ENCODE measurements at regions of chr14 and their contacts with region 1.

Region 1: GRCh38 chr14:94136575-94137331 is 7.3 kb upstream of the IFI27L2 start:
- DNase-seq: peak; percentile 68
- H3K27ac ChIP-seq: no peak overlapping the region
- CTCF ChIP-seq: peak; percentile 96

Region 2: GRCh38 chr14:93185354-93185761 is 951.4 kb before region 1 on chr14:
- CTCF ChIA-PET with region 1: no interaction called
- POLR2A ChIA-PET with region 1: no interaction called
- DNase-seq: no peak
- H3K27ac ChIP-seq: peak overlapping the region; percentile 97
- CTCF ChIP-seq: no peak

Region 3: GRCh38 chr14:94036313-94037050 is 100.3 kb before region 1 on chr14:
- CTCF ChIA-PET with region 1: interaction called, 14 read pairs
- POLR2A ChIA-PET with region 1: no interaction called
- DNase-seq: peak; percentile 75
- H3K27ac ChIP-seq: no peak overlapping the region
- CTCF ChIP-seq: peak; percentile 78

Region 4: DNA sequence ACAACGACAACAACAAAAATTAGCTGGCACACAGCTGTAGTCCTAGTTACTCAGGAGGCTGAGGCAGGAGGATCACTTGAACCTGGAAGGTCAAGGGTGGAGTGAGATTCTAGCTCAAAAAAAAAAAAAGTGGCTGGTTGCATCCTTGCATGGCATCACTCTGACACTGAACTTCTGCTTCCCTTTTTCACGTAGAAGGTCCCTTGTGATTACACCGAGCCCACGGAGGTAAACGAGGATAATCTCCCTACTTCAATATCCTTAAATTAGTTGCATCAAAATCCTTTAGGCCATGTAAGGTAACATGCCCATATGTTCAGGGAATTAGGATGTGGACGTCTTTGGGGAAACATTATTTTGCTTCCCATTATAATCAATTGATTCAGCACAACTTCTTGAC is 33.4 kb after region 1 on chr14:
- CTCF ChIA-PET with region 1: interaction called, 10 read pairs
- POLR2A ChIA-PET with region 1: no interaction called
- DNase-seq: no peak
- H3K27ac ChIP-seq: no peak overlapping the region
- CTCF ChIP-seq: no peak

Region 5: DNA sequence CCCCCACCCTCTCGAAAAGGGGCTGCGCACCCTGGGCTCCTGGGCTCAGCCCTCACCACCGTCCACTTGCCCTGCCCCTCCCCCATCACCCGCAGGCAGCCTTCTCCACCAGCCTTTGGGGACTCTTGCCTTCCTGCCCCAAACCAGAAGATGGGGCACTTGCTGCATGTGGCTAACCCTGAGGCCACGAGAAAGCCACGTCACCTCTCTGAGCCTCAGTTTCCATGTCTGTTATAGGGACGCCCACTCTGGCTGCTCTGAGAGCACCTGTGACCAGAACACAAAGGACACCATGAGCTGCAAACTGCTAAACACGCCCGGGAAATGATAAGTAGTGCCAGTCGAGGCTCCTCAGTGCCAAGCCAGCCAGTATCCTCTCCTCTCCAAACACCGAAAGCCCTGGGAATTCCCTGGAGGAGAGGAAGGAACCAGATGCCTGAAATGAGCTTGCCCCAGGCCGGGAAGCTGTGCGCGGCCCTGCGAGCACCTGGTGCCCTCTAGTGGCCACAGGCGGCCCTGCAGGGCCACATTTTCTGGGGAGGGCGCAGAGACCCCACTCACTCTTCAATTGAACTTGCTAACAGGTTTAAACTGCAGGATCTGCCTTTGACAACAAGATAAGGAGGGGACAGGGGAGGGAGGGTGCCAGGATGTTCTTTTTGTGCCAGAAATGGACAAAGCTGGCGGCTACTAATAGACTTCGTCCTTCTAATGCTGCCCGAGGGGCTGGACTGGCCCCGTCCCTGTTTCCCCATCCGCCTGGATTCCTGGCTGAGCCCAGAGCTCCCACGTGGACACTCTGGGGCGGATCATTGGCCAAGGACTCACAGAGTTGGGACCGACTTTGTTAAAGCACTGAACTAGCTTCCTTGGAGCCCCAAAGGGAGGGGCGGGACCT is 349.4 kb after region 1 on chr14:
- CTCF ChIA-PET with region 1: interaction called, 12 read pairs
- POLR2A ChIA-PET with region 1: no interaction called
- DNase-seq: peak; percentile 72
- H3K27ac ChIP-seq: no peak overlapping the region
- CTCF ChIP-seq: peak; percentile 98